MCF 10A (cell line): ENCODE measurements at regions of chr11 and their contacts with region 1.

Region 1: GRCh38 chr11:14454861-14455632 is 44.6 kb downstream of the COPB1 start:
- DNase-seq: peak; percentile 38
- H3K4me3 Mint-ChIP-seq: no peak overlapping the region
- H3K27ac Mint-ChIP-seq: no peak overlapping the region
- H3K4me1 Mint-ChIP-seq: no peaks in the 10 kb centered on the region
- H3K27me3 Mint-ChIP-seq: no peaks in the 10 kb centered on the region
- CTCF ChIP-seq: peak; percentile 52

Region 2: GRCh38 chr11:14202251-14203196 is 252.5 kb before region 1 on chr11:
- CTCF ChIA-PET with region 1: no interaction called
- POLR2A ChIA-PET with region 1: no interaction called
- intact Hi-C with region 1: no loop called
- DNase-seq: no peak
- H3K4me3 Mint-ChIP-seq: no peak overlapping the region
- H3K27ac Mint-ChIP-seq: no peak overlapping the region
- H3K4me1 Mint-ChIP-seq: no peaks in the 10 kb centered on the region
- H3K27me3 Mint-ChIP-seq: peaks cover 29% of the 10 kb centered on the region
- CTCF ChIP-seq: no peak

Region 3: GRCh38 chr11:14288189-14288935 is 166.7 kb before region 1 on chr11:
- CTCF ChIA-PET with region 1: interaction called, 20 read pairs
- POLR2A ChIA-PET with region 1: no interaction called
- intact Hi-C with region 1: no loop called
- DNase-seq: peak; percentile 39
- H3K4me3 Mint-ChIP-seq: peak overlapping the region; percentile 56
- H3K27ac Mint-ChIP-seq: peak overlapping the region; percentile 95
- H3K4me1 Mint-ChIP-seq: peaks cover 16% of the 10 kb centered on the region
- H3K27me3 Mint-ChIP-seq: no peaks in the 10 kb centered on the region
- CTCF ChIP-seq: no peak

Region 4: DNA sequence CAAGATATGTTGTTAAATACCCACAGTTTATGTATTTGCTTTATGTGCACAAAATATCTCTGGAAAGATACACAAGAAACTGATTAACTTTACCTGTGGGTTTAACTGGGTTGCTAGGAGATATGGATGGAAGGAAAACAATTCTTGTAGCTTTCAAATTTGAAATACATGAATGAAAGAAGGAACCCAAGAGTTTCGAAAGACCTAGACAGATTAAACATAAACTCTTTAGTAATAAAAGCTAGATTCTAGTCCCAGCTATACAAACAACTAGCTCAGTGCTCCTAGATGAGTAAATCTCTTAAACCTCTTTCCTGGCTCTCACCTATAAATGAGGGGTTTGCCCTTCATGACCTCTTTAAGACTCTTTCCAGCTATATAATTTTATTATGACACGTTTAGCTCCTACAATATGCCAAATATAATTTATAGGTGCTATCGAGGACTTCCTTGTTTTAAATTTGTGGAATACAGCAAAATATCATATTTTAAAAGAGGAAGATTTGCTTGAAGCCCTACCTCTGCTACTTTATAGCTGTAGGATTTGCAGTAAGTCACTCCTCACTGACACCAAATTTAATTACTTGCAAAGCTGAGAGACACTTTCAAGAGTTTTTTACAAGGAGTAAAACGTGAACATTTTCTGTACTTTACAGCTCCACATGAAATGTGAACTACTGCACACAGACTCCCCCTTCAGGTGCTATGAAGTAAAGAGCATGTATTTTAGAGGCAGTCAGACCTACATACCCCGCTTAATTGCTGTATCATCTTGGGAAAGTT is 146.7 kb before region 1 on chr11:
- CTCF ChIA-PET with region 1: interaction called, 179 read pairs
- POLR2A ChIA-PET with region 1: interaction called, 5 read pairs
- intact Hi-C with region 1: no loop called
- DNase-seq: peak; percentile 65
- H3K4me3 Mint-ChIP-seq: no peak overlapping the region
- H3K27ac Mint-ChIP-seq: no peak overlapping the region
- H3K4me1 Mint-ChIP-seq: peaks cover 2% of the 10 kb centered on the region
- H3K27me3 Mint-ChIP-seq: no peaks in the 10 kb centered on the region
- CTCF ChIP-seq: peak; percentile 42

Region 5: GRCh38 chr11:14380947-14381561 is 74.0 kb before region 1 on chr11:
- CTCF ChIA-PET with region 1: interaction called, 20 read pairs
- POLR2A ChIA-PET with region 1: interaction called, 3 read pairs
- intact Hi-C with region 1: loop called (anchors 2 kb)
- DNase-seq: peak; percentile 73
- H3K4me3 Mint-ChIP-seq: peak overlapping the region; percentile 76
- H3K27ac Mint-ChIP-seq: peak overlapping the region; percentile 75
- H3K4me1 Mint-ChIP-seq: peaks cover 15% of the 10 kb centered on the region
- H3K27me3 Mint-ChIP-seq: no peaks in the 10 kb centered on the region
- CTCF ChIP-seq: no peak

Region 6: DNA sequence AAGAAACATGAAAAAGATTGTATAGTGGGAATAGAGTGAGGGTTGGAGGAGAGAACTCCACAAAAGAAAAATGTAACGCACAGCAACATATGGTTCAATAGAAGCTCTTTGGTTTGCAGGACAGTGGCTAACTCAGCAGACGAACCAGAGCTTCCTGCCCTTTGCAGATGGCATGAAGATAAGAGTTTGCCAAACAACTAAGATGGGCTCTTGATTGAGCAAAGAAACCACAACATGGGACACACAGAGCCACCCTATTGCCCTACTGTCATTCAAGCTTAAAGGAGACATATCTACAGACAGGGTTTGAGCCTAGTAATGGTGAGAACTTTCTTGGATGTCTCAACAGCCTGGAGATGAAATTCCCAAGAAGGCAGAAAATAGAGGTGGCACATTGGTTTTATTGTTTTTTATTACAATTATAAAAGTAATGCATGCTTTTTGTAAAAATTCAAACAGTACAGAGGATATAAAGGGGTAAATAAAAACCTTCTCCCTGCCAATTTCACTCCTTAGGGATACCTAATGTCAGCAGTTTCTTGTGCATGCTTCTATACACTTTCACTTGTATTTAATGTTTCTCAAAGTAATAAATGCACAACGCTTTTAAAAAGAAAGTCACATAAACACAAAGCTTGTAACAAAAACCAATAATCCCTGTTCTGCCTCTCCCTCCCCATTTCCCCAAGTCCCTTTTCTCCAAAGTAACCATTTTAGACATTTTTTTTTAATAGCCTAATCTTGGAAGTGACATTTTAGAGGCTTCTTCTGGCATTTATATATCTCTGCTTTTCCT is 19.1 kb before region 1 on chr11:
- CTCF ChIA-PET with region 1: interaction called, 14 read pairs
- POLR2A ChIA-PET with region 1: interaction called, 3 read pairs
- intact Hi-C with region 1: no loop called
- DNase-seq: no peak
- H3K4me3 Mint-ChIP-seq: no peak overlapping the region
- H3K27ac Mint-ChIP-seq: no peak overlapping the region
- H3K4me1 Mint-ChIP-seq: no peaks in the 10 kb centered on the region
- H3K27me3 Mint-ChIP-seq: no peaks in the 10 kb centered on the region
- CTCF ChIP-seq: no peak

Region 7: DNA sequence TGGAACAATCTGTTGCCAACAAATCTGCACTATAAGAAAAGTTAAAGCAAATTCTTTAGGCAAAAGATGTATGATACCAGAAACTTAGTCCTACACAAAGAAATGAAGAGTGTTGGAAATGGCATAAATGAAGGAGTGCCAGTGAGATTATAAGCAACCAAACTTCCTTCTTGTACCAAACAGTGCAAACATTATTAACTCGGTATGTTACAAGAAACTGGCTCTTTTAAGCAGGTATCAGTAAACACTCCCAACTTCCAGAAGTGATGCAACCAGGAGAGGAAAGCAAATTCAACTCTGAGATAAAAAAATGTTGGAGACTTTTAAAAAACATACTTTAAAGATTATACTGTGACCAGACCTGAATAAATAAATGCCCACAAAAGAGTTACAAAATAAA is 16.1 kb after region 1 on chr11:
- CTCF ChIA-PET with region 1: interaction called, 52 read pairs
- POLR2A ChIA-PET with region 1: no interaction called
- intact Hi-C with region 1: no loop called
- DNase-seq: no peak
- H3K4me3 Mint-ChIP-seq: no peak overlapping the region
- H3K27ac Mint-ChIP-seq: no peak overlapping the region
- H3K4me1 Mint-ChIP-seq: no peaks in the 10 kb centered on the region
- H3K27me3 Mint-ChIP-seq: no peaks in the 10 kb centered on the region
- CTCF ChIP-seq: no peak

Region 8: DNA sequence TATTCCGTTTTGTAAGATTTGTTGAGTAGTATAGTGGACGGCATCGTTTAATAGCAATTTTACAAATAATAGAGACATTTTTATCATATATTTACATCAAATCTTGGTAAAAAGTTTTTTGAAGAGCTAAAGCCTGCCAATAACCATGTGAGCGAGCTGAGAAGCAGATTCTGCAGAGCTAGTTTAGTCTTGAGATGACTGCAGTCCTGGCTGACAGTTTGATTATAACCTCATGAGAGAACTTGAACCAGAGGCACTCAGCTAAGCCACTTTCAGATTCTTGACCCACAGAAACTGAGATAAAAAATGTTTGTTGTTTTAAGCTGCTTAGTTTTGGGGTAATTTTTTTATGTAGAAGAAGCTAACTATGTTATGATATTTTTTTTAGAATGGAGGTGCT is 267.4 kb after region 1 on chr11:
- CTCF ChIA-PET with region 1: no interaction called
- POLR2A ChIA-PET with region 1: no interaction called
- intact Hi-C with region 1: no loop called
- DNase-seq: no peak
- H3K4me3 Mint-ChIP-seq: no peak overlapping the region
- H3K27ac Mint-ChIP-seq: no peak overlapping the region
- H3K4me1 Mint-ChIP-seq: no peaks in the 10 kb centered on the region
- H3K27me3 Mint-ChIP-seq: peaks cover 44% of the 10 kb centered on the region
- CTCF ChIP-seq: no peak

Region 9: DNA sequence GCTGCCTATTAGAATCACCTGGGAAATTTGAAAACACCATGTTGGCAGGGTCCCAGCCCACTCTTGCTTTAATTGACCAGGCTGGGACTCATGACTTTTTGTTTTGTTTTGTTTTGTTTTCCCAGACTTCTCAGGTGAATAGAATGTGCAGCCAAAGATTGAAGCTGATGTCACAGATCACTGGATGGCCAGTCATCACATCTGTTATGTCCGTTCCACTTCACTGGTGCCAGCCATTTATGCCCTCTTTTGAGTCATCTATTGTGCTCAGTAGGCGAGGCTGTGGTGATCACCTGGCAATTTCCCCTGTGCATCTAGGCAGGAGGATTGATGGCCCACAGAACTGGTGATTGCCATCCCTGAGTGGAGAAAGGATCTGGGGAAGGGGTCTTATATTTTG is 957.0 kb after region 1 on chr11:
- CTCF ChIA-PET with region 1: no interaction called
- POLR2A ChIA-PET with region 1: no interaction called
- intact Hi-C with region 1: no loop called
- DNase-seq: peak; percentile 17
- H3K4me3 Mint-ChIP-seq: no peak overlapping the region
- H3K27ac Mint-ChIP-seq: no peak overlapping the region
- H3K4me1 Mint-ChIP-seq: no peaks in the 10 kb centered on the region
- H3K27me3 Mint-ChIP-seq: peaks cover 36% of the 10 kb centered on the region
- CTCF ChIP-seq: no peak